Heart right ventricle (tissue), 16 donors: ENCODE measurements at regions of chr4 and their contacts with region 1.

Region 1: DNA sequence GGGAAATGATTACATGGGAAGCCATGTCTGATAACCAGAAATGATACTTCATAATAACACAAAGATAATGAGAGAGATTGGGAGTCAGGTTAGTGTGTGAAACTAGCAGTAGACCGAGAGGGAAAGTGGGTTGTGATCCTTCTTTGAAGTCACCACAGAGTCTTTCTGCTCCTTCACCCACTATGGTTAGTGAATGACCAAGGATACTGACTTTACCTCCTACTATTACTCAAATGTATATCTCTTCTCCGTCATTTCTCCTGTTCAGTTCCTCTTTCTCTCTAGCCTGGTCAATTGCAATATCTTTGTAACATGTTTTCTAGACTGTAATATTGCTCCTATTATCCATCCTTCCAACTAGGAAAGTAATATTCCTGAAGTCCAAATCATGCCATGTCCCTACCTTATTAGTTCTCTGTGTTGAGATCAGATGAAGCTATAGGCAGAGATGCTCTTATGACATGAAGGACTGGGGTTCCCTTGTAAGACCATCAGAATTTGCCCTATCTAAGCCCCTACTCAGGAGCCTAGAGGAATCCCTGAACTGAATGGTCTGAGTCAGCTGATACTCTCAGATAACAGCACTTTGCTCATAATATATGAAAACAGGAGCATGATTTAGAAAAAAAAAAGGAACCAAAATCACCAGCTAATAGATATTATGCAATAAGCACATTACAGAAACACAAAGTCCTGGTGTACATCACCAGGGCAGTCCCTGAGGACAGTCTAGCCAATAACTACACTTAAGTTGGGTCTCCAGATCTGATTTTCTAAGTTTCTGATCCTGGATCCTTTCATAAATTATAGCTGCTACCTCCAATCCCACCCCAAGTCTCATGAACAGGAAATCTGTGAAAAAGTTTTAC is 81.2 kb downstream of the SHROOM3 start:
- DNase-seq: no peak
- ATAC-seq: no peak
- H3K4me3 ChIP-seq: no peak overlapping the region
- H3K27ac ChIP-seq: no peak overlapping the region
- H3K4me1 ChIP-seq: peaks cover 0 to 5% (median 0%) of the 10 kb centered on the region in 9 donors
- H3K27me3 ChIP-seq: no peaks in the 10 kb centered on the region
- CTCF ChIP-seq: no peak

Region 2: DNA sequence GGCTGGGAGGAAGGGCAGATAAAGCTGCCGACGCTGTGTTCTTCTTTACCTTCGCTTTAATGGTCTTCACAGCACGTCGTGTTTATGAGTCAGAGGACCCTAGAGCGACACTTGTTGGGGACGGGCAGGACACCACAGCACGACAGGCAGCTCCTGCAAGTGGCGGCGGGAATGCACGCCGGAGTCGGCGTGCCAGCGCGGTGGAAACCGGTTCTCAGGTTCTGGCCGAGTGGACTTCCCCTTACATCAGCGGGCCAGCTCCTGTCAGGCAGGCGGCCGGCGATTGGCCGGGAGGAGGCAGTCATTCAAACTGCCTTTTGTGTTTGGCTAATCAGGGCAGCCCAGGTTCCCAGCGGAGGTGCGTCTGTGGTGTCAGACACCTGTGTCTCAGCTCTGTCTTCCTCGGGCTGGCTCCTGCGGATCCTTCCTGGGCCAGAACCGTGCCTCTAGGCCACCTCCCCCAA is 69.7 kb after region 1 on chr4:
- intact Hi-C with region 1: loop called in 2 of 10 experiments (anchors 10 kb)
- DNase-seq: peak; percentile 74 to 77
- ATAC-seq: peak; percentile 68 to 93 (median 89)
- H3K4me3 ChIP-seq: peak overlapping the region in 9 of 10 donors; percentile 27 to 56 (median 51)
- H3K27ac ChIP-seq: peak overlapping the region; percentile 55 to 88 (median 76)
- H3K4me1 ChIP-seq: peaks cover 0 to 41% (median 16%) of the 10 kb centered on the region in 9 donors
- H3K27me3 ChIP-seq: peaks cover 0 to 36% (median 0%) of the 10 kb centered on the region in 7 donors
- CTCF ChIP-seq: peak in 7 of 9 donors; percentile 19 to 54 (median 38)

Region 3: DNA sequence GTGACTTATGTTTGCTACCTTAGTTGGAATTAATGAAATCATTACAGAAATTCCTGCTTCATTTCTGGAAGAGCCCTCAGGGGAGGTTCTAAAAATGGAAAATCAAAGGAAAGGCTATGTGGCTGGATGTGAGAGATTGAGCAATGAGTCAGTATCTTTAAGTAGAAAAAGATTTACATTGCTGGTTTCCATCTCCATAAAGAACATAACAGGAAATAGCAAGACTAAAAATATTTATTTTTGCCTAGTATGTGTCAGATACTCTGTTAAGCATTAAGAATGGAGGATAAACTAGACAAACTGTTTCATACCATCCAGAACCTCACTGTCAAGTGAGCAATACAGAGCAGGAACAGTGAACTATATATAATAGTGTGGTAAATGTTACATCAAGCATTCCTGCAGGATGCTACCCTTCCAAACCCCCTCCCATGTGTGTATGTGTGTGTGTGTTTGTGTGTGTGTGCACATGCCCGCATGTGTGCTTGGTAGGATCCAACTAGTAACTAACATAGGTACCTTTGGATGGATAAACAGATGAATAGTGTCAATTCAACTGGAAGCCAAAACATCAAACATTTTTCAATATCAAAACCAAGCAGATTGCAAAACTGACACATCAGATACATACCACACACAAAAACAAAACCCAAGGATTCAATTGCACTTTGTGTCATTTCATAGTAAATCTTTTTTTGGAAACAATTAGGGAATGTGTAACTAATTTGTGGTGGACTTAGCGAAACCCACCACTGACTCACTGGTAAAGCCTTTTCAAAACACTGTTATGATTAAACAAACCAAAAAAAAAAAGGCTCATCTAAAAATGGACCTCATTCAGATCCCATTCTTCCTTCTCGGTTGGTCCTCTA is 142.3 kb after region 1 on chr4:
- intact Hi-C with region 1: loop called in 3 of 10 experiments (anchors 5 to 10 kb)
- DNase-seq: no peak
- ATAC-seq: no peak
- H3K4me3 ChIP-seq: no peak overlapping the region
- H3K27ac ChIP-seq: peak overlapping the region in 2 of 10 donors; percentile 7 to 9
- H3K4me1 ChIP-seq: peaks cover 0 to 28% (median 13%) of the 10 kb centered on the region in 9 donors
- H3K27me3 ChIP-seq: no peaks in the 10 kb centered on the region
- CTCF ChIP-seq: no peak

Region 4: DNA sequence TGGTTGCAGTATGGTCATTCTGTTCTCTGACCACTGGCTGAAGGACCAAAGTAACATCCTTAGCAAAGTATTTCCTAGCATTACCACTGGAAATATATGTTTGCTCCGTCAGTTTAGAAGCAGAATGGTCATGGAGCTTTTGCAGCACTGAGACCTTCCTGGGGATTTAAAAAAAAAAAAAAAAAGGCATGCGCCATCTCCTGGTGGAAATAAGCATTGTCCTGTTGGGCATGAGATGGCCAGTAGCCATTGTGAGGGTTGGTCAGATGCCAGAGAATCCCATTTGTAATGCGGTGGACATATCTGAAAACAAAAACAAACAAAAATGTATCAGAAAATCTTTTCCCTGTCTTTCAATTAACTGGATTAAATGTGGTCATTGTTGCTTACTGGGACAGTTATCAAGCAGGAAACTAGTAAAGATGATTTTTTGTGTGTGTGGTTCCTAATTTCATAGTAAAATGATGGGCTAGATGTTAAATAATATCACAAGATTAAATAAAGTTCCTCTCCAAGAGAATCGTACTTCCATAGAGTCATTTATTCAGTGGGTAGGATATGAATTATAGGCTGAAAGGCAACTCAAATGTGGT is 242.2 kb after region 1 on chr4:
- intact Hi-C with region 1: loop called in 9 of 10 experiments (anchors 1 to 10 kb)
- DNase-seq: peak in 1 of 2 donors; percentile 35
- ATAC-seq: peak in 7 of 8 donors; percentile 41 to 69 (median 57)
- H3K4me3 ChIP-seq: no peak overlapping the region
- H3K27ac ChIP-seq: peak overlapping the region in 2 of 10 donors; percentile 5 to 60
- H3K4me1 ChIP-seq: peaks cover 0 to 38% (median 20%) of the 10 kb centered on the region in 9 donors
- H3K27me3 ChIP-seq: no peaks in the 10 kb centered on the region
- CTCF ChIP-seq: peak; percentile 55 to 82 (median 77)

Region 5: GRCh38 chr4:77036206-77036605 is 520.0 kb after region 1 on chr4:
- intact Hi-C with region 1: loop called in 5 of 10 experiments (anchors 10 kb)
- DNase-seq: no peak
- ATAC-seq: no peak
- H3K4me3 ChIP-seq: no peak overlapping the region
- H3K27ac ChIP-seq: no peak overlapping the region
- H3K4me1 ChIP-seq: peaks cover 0 to 14% (median 0%) of the 10 kb centered on the region in 9 donors
- H3K27me3 ChIP-seq: no peaks in the 10 kb centered on the region
- CTCF ChIP-seq: no peak

Region 6: DNA sequence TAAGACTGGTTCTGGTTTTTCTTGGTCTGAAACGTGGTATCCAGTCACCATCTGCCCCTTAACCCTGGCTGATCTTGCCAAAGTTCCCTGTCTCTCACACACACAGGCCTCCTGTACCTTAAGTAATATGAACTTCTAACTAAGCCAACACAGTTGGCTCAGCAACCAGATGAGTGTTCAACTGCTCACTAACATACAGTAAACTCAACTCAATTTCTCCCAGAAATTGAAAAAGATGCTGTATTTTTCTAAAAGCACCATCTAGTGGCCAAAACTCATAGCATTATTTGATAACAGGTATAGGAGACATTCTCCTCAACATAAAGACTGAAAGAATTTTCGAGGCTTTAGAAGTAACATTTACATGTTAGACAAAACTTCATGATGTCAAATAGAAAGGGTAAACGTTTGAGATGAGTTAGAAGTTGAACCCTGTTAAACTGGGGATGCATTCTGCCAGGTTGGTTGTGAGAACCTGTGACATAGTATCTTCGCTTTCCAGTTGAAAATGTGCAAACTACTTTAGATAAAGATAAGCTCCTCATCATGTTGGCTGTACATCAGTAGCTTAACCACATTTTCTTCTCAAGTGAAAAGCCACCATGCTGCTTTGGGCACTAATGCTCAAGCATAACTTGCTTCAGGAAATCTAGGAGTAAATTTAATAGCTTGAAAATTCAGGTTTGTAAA is 528.4 kb after region 1 on chr4:
- intact Hi-C with region 1: loop called in 7 of 10 experiments (anchors 5 to 10 kb)
- DNase-seq: no peak
- ATAC-seq: peak in 6 of 8 donors; percentile 11 to 50 (median 24)
- H3K4me3 ChIP-seq: no peak overlapping the region
- H3K27ac ChIP-seq: peak overlapping the region in 1 of 10 donors; percentile 3
- H3K4me1 ChIP-seq: peaks cover 0 to 24% (median 0%) of the 10 kb centered on the region in 9 donors
- H3K27me3 ChIP-seq: no peaks in the 10 kb centered on the region
- CTCF ChIP-seq: peak; percentile 33 to 67 (median 53)

Region 7: DNA sequence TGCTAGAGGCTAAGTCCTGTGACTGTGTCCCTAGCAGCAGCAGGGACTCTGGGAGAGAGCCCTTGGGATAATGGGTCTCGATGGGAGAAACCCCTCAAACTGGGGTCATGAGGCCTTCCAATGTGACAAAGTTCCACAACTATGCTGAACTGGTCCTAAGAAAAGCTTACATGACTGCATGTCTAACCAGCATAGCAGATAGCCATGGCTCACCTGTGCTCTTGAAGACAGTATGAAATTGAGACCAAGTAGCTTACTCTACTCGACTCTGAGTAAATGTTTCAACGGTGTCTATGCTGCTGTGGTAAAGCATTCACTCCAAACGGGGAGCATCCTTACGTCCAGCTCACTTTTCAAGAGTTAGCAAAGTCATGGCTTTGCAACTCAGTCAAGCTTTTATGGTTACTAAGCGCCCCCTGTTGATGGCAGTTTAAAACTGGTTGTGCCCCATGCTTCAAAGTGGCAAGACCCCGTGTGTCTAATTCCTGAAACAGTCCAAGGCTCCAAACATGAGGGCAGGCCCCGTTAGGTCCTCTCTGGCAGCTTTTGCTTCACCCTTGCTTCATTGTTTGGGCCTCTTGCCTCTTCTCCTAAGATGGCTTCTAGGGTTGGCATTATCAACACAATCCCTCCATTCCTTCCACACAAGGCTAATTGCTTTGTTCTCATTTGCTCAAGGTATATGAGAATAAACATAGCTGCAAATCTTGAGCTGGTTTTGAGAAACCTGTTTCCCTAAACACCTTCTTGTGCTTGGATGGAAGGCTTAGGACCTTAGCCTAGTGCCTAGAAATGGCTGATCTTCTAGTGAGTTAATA is 687.4 kb after region 1 on chr4:
- intact Hi-C with region 1: loop called in 7 of 10 experiments (anchors 2 to 10 kb)
- DNase-seq: peak in 1 of 2 donors; percentile 77
- ATAC-seq: peak in 7 of 8 donors; percentile 59 to 85 (median 76)
- H3K4me3 ChIP-seq: no peak overlapping the region
- H3K27ac ChIP-seq: no peak overlapping the region
- H3K4me1 ChIP-seq: peaks cover 0 to 6% (median 0%) of the 10 kb centered on the region in 9 donors
- H3K27me3 ChIP-seq: no peaks in the 10 kb centered on the region
- CTCF ChIP-seq: peak; percentile 48 to 84 (median 78)